CD8-positive, alpha-beta T cell (primary cell): ENCODE measurements at regions of chr2 and their contacts with region 1.

Region 1: GRCh38 chr2:168160897-168161296 is 86.5 kb downstream of the STK39 start:
- DNase-seq: peak in 2 of 9 experiments; percentile 26 to 36
- ATAC-seq: peak; percentile 52
- H3K4me3 ChIP-seq: no peak overlapping the region
- H3K4me3 Mint-ChIP-seq: no peak overlapping the region
- H3K27ac ChIP-seq: no peak overlapping the region
- H3K27ac Mint-ChIP-seq: no peak overlapping the region
- H3K4me1 ChIP-seq: no peaks in the 10 kb centered on the region
- H3K4me1 Mint-ChIP-seq: peaks cover 29% of the 10 kb centered on the region
- H3K27me3 ChIP-seq: no peaks in the 10 kb centered on the region
- H3K27me3 Mint-ChIP-seq: no peaks in the 10 kb centered on the region
- CTCF ChIP-seq: no peak

Region 2: GRCh38 chr2:168176402-168176801 is 15.5 kb after region 1 on chr2:
- CTCF ChIA-PET with region 1: no interaction called
- POLR2A ChIA-PET with region 1: no interaction called
- intact Hi-C with region 1: no loop called
- DNase-seq: no peak
- ATAC-seq: no peak
- H3K4me3 ChIP-seq: no peak overlapping the region
- H3K4me3 Mint-ChIP-seq: no peak overlapping the region
- H3K27ac ChIP-seq: no peak overlapping the region
- H3K27ac Mint-ChIP-seq: peak overlapping the region; percentile 70
- H3K4me1 ChIP-seq: peaks cover 8% of the 10 kb centered on the region
- H3K4me1 Mint-ChIP-seq: peaks cover 41% of the 10 kb centered on the region
- H3K27me3 ChIP-seq: no peaks in the 10 kb centered on the region
- H3K27me3 Mint-ChIP-seq: no peaks in the 10 kb centered on the region
- CTCF ChIP-seq: no peak

Region 3: GRCh38 chr2:168251801-168252200 is 90.9 kb after region 1 on chr2:
- CTCF ChIA-PET with region 1: interaction called, 3 read pairs
- POLR2A ChIA-PET with region 1: no interaction called
- intact Hi-C with region 1: loop called in 1 of 2 experiments (anchors 2 kb)
- DNase-seq: no peak
- ATAC-seq: no peak
- H3K4me3 ChIP-seq: no peak overlapping the region
- H3K4me3 Mint-ChIP-seq: no peak overlapping the region
- H3K27ac ChIP-seq: no peak overlapping the region
- H3K27ac Mint-ChIP-seq: no peak overlapping the region
- H3K4me1 ChIP-seq: peaks cover 6% of the 10 kb centered on the region
- H3K4me1 Mint-ChIP-seq: peaks cover 13% of the 10 kb centered on the region
- H3K27me3 ChIP-seq: no peaks in the 10 kb centered on the region
- H3K27me3 Mint-ChIP-seq: no peaks in the 10 kb centered on the region
- CTCF ChIP-seq: no peak

Region 4: DNA sequence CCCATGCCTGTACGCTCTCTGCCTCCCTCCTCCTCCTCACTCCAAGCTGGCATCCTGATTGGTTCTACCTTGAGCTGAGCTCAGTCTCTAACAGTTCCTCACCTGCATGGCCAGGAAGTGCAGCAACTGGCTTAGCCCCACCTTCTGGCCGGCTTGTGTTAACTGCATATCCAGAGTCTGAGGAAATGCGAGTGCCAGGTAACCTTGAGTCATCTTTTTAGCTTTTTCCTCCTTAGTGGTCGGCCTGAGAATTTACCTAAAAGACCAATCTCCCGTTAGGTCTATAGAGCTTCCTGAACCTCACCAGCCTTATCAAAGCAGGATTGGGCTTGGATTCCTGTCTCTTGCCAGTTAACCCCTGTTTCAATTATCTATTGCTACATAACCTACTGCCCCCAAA is 176.0 kb after region 1 on chr2:
- CTCF ChIA-PET with region 1: interaction called, 12 read pairs
- POLR2A ChIA-PET with region 1: no interaction called
- intact Hi-C with region 1: loop called (anchors 1 to 10 kb)
- DNase-seq: peak in 8 of 9 experiments; percentile 28 to 69 (median 60)
- ATAC-seq: peak; percentile 94
- H3K4me3 ChIP-seq: no peak overlapping the region
- H3K4me3 Mint-ChIP-seq: no peak overlapping the region
- H3K27ac ChIP-seq: no peak overlapping the region
- H3K27ac Mint-ChIP-seq: no peak overlapping the region
- H3K4me1 ChIP-seq: no peaks in the 10 kb centered on the region
- H3K4me1 Mint-ChIP-seq: peaks cover 5% of the 10 kb centered on the region
- H3K27me3 ChIP-seq: no peaks in the 10 kb centered on the region
- H3K27me3 Mint-ChIP-seq: no peaks in the 10 kb centered on the region
- CTCF ChIP-seq: peak; percentile 36